ENCODE measurements at regions of chr1 and their contacts with region 1.

Region 1: GRCh38 chr1:66446261-66447001 is 87.5 kb upstream of the SGIP1 start:
- DNase-seq: peak; percentile 30
- H3K4me3 ChIP-seq: no peak overlapping the region
- H3K27ac ChIP-seq: no peak overlapping the region
- H3K4me1 ChIP-seq: no peaks in the 10 kb centered on the region
- H3K27me3 ChIP-seq: no peaks in the 10 kb centered on the region
- CTCF ChIP-seq: peak; percentile 77

Region 2: DNA sequence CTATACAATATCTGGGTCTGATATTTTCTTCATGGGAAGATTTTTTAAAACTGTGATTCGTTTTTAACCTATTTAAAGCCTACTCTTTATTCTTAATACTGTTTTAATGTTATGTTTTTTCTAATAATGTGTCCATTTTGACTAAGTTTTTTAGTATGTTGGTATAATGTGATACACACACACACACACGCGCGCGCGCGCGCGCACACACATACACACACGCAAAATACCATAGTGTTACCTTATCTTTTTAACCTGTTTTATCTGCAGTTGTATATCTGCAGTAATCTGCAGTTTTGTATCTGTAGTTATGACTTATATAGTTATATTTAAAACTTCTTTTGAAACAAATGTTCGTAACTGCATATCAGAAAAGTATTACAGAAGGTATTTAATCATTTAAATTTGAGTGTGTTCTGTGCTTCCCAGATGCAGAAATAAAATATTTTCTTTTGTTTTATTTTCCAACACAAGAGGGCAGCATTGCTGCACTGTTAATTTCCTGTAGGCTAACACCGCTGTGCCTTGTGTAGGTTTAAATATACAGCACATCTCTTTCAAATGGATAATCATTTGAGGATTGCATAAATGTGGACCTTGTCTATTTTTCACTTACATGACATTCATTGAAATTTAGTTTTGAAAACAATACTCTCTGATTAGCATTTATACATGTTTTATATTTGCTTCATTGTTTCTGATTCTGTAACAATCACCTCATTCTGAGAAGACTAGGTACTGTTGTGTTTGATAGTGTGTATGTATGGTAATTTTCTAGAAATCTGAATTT is 487.7 kb before region 1 on chr1:
- intact Hi-C with region 1: loop called (anchors 5 kb)
- DNase-seq: no peak
- H3K4me3 ChIP-seq: no peak overlapping the region
- H3K27ac ChIP-seq: no peak overlapping the region
- H3K4me1 ChIP-seq: peaks cover 6% of the 10 kb centered on the region
- H3K27me3 ChIP-seq: no peaks in the 10 kb centered on the region
- CTCF ChIP-seq: peak; percentile 66

Region 3: DNA sequence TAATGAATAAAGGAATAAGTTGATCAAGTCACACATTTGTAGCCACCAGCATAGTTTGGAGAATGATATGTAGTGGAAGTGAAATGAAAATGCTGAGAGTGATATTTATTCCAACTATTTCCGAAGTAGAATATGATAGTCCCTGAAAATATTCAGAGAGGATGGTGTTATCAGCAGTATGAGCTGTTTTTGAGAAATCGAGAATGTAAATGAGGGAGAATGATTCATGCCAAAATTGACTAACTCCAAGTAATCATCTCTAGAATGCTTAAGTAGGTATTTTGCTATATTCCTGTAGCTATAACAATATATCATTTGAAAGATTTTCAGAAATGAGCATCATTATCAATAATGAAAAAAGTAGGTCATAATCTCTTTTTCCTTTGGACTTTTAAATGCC is 474.9 kb before region 1 on chr1:
- intact Hi-C with region 1: no loop called
- DNase-seq: no peak
- H3K4me3 ChIP-seq: no peak overlapping the region
- H3K27ac ChIP-seq: no peak overlapping the region
- H3K4me1 ChIP-seq: no peaks in the 10 kb centered on the region
- H3K27me3 ChIP-seq: no peaks in the 10 kb centered on the region
- CTCF ChIP-seq: no peak

Region 4: GRCh38 chr1:66253330-66253921 is 193.0 kb before region 1 on chr1:
- intact Hi-C with region 1: loop called (anchors 1 kb)
- DNase-seq: no peak
- H3K4me3 ChIP-seq: no peak overlapping the region
- H3K27ac ChIP-seq: no peak overlapping the region
- H3K4me1 ChIP-seq: no peaks in the 10 kb centered on the region
- H3K27me3 ChIP-seq: no peaks in the 10 kb centered on the region
- CTCF ChIP-seq: peak; percentile 61

Measured in colonic mucosa (tissue), 4 donors.